ENCODE measurements at regions of chr4 and their contacts with region 1.

Region 1: DNA sequence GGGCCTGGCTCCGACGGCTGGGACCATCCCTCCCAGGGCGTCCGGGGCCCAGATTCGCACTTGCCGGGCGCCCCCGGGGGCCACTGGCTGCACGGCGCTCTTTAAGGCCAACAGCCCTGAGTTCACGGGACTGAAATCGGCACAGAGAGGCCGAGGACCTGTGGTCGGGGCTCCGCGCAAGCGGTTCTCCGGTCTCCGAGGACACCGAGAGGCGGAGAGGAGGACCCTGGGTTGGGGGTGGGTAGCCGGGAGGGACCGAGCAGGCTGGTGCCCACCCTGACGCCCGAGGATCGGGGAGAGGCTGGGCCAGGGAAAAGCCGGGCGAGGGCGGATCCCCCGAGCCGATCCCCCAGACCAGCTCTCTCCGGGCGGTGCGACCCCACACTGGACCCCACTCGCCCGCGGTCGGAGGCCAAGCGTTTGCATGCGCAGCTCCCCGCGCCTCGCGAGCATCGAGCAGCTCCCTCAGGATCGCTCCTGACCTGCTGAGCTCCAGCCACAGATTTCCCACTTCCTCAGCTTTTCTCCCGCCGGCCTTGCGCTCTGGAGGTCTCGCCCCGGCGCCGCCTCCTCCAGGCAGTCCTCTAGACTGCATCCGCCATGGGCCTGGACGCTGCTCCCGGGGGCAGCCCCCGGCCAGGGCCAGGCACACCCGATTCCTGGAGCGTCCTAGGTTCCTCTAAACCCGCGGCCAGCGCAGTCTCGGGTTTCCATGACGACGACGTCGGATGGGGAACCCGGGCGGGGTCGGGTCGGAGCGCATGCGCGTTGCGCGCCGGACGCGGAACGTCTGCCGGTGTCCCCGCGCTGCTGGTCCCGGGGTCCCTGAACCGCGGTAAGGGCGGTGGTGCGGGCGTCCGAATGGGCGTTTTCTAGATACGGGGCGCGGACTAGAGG is 17.6 kb upstream of the NAT8L start:
- DNase-seq: peak; percentile 98
- H3K4me3 Mint-ChIP-seq: peak overlapping the region; percentile 86
- H3K27ac Mint-ChIP-seq: peak overlapping the region; percentile 58
- H3K4me1 Mint-ChIP-seq: peaks cover 7% of the 10 kb centered on the region
- H3K27me3 Mint-ChIP-seq: peaks cover 30% of the 10 kb centered on the region

Region 2: DNA sequence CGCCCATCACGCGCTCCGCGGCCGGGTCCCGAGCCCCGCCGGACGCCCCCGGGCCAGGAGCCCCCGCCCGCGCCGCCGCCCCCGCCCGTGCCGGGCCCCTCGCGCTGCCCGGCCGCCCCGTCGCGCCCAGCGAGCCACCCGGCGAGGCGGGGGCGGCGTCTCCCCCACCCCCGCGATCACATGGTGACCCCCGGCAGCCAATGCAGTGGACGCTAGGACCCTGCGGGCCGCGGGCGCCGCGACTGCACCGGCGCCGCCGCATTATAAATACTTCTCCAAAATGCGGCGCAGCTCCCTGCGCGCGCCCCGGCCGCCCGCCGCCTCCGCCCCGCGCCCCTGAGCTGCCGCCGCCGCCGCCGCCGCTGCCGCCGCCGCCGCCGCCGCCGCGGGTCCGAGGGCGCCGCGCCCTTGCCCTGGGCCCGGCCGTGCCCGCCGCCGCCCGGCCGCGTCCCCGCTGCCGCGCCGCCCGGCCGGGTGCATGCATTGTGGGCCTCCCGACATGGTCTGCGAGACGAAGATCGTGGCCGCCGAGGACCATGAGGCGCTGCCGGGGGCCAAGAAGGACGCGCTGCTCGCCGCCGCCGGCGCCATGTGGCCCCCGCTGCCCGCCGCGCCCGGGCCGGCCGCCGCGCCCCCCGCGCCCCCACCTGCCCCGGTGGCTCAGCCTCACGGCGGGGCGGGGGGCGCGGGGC is 17.7 kb after region 1 on chr4 and contains the start of gene NAT8L:
- intact Hi-C with region 1: loop called (anchors 2 kb)
- DNase-seq: peak; percentile 80
- H3K4me3 Mint-ChIP-seq: peak within 1 kb of the TSS; percentile 45
- H3K27ac Mint-ChIP-seq: no peak within 1 kb of the TSS
- H3K4me1 Mint-ChIP-seq: no peaks in the 10 kb centered on the region
- H3K27me3 Mint-ChIP-seq: peaks cover 30% of the 10 kb centered on the region
- total RNA-seq, gene NAT8L: 7.3 and 7.7 TPM in 2 replicates

Region 3: DNA sequence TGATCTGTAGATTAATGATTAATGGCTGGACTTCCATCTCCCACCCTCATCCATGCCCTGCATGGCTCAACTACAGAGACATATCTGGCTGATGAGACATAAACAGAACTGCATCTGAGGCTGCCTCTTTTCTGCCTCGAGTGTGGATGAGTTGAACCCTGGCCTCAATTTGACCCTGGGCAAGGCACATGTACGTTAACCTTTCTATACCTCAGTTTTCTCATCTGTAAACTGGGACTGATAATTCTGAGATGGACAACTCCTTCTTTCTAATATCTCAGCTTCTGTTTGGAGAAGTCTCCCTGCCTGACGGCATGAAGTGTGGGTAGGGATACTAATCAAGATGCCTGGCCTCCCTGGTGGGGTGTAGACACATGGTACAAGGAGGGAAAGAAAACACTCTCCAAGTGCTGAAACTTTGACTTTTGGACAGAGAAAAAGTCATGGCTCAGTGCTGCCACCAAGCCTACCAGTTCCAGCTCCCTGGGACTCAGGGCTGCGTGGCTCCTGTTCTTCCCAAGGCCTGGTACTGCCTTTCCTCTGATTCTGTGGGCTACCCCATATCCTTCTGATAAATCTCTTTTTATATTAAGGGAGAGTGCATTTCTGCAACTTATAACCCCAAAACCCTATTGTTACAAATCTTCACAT is 136.1 kb after region 1 on chr4:
- intact Hi-C with region 1: loop called (anchors 10 kb)
- DNase-seq: peak; percentile 64
- H3K4me3 Mint-ChIP-seq: no peak overlapping the region
- H3K27ac Mint-ChIP-seq: no peak overlapping the region
- H3K4me1 Mint-ChIP-seq: peaks cover 53% of the 10 kb centered on the region
- H3K27me3 Mint-ChIP-seq: no peaks in the 10 kb centered on the region

Region 4: DNA sequence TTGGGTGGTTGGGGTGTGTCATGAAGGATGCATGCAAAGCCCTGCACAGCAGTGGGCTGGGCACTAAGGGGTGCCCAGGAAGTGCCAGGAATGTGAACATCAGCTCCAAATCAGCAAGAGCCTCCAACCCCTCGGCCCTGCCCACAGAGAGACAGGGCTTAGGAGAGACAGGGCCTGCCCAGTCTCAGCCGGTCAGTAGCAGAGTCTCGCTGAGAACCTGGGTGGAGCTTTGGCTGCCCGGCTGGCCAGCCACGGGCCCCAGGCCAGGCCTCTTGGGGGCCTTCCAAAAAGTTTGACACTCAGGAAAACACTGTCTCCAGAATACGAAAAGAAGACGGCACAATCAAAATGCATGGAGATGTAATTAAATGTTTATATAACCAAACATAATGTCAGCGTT is 224.7 kb after region 1 on chr4:
- intact Hi-C with region 1: no loop called
- DNase-seq: no peak
- H3K4me3 Mint-ChIP-seq: no peak overlapping the region
- H3K27ac Mint-ChIP-seq: no peak overlapping the region
- H3K4me1 Mint-ChIP-seq: no peaks in the 10 kb centered on the region
- H3K27me3 Mint-ChIP-seq: no peaks in the 10 kb centered on the region

Measured in activated CD4-positive, alpha-beta T cell treated with anti-CD3 and anti-CD28 coated beads, Interleukin-2, amount 10 ng/mL, durations not matched to agents 24 days and 14 days (primary cell).